K562 (cell line): ENCODE measurements at regions of chr5 and their contacts with region 1.

Region 1: DNA sequence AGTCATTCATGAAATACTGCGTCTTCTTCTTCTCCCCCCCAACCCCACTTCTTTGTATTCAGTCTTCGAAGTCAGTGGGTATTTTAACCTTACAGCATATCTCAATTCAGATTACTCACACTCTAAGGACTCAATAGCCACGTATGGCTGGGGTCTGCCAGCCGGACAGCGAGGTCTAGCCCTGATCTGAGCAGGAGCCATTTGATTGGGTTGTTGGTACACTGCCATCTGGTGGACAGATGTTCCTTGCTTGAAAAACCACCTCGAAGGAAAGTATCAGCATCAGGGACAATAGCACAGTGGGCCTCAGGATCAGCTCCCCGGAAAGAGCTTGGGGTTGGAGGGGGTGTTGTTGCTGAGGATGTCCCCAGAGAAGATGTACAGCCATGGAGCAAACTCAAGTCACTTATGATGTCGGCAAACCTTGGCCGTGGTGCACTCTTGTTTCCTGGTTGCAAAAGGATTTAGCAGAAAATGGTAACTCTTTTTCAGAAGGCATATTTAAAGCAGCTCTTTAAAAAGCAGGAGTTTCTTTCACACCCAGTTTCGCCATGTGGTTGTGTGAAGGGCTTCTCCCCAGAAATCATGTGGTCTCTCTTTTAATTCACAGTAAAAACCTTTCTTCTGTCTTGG is 31.7 kb upstream of the KCNMB1 start:
- DNase-seq: peak; percentile 70 to 72 (median 72)
- ATAC-seq: peak; percentile 89
- H3K4me3 ChIP-seq: no peak overlapping the region
- H3K27ac ChIP-seq: no peak overlapping the region
- H3K4me1 ChIP-seq: no peaks in the 10 kb centered on the region
- H3K27me3 ChIP-seq: peaks cover 0 to 11% of the 10 kb centered on the region in 2 experiments; a peak in 2 of 5 replicates
- CTCF ChIP-seq: peak; percentile 65 to 74 (median 73)
- EP300 ChIP-seq: no peak
- POLR2A ChIP-seq: no peak
- RAD21 ChIP-seq: peak; percentile 66 to 79

Region 2: DNA sequence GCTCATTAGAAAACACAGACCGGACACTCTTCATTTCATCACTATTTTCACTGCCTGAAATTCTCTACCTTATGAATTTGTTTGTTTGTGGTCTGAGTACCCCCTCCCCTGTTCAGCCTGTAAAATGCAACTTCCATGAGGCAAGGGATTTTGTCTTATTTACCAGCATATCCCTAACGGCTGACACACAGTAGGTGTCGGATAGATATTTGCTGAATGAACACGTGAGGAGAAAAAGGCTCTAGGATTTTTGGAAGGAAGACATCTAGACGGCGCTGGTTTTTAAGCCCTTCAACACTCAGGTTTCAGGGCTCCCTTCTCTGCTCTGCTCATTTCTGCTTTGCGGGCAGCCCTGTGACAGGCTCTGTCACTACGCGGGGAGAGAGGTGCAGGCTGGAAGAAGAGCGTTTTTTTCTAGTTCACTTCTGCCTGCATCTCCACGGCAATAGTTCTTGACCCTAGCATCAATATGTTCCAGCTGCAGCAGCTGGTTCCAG is 72.7 kb before region 1 on chr5:
- CTCF ChIA-PET with region 1: no interaction called
- POLR2A ChIA-PET with region 1: no interaction called
- in situ Hi-C with region 1: no loop called
- intact Hi-C with region 1: loop called (anchors 5 kb)
- DNase-seq: no peak
- ATAC-seq: no peak
- H3K4me3 ChIP-seq: no peak overlapping the region
- H3K27ac ChIP-seq: no peak overlapping the region
- H3K4me1 ChIP-seq: no peaks in the 10 kb centered on the region
- H3K27me3 ChIP-seq: peaks cover 15 to 47% of the 10 kb centered on the region in 2 experiments
- CTCF ChIP-seq: peak in 1 of 3 experiments; percentile 31; a peak in 2 of 6 replicates
- EP300 ChIP-seq: no peak
- POLR2A ChIP-seq: no peak
- RAD21 ChIP-seq: peak; percentile 8 to 50; a peak in 2 of 4 replicates

Region 3: GRCh38 chr5:171893290-171893886 is 1472.5 kb after region 1 on chr5:
- CTCF ChIA-PET with region 1: no interaction called
- POLR2A ChIA-PET with region 1: no interaction called
- in situ Hi-C with region 1: no loop called
- intact Hi-C with region 1: no loop called
- DNase-seq: no peak
- ATAC-seq: no peak
- H3K4me3 ChIP-seq: no peak overlapping the region
- H3K27ac ChIP-seq: no peak overlapping the region
- H3K4me1 ChIP-seq: no peaks in the 10 kb centered on the region
- H3K27me3 ChIP-seq: no peaks in the 10 kb centered on the region
- CTCF ChIP-seq: no peak
- EP300 ChIP-seq: no peak
- POLR2A ChIP-seq: no peak
- RAD21 ChIP-seq: no peak